B cell (primary cell): ENCODE measurements at regions of chr6 and their contacts with region 1.

Region 1: GRCh38 chr6:169701954-169702839 is at the starts of genes C6orf120 and WDR27:
- DNase-seq: peak; percentile 98
- ATAC-seq: peak; percentile 90
- H3K4me3 ChIP-seq: peak within 1 kb of the TSS; percentile 61 to 95 (median 85)
- H3K4me3 Mint-ChIP-seq: peak within 1 kb of the TSS; percentile 95
- H3K27ac ChIP-seq: peak within 1 kb of the TSS; percentile 86 to 95
- H3K27ac Mint-ChIP-seq: peak within 1 kb of the TSS; percentile 94
- H3K4me1 ChIP-seq: peaks cover 27 to 44% of the 10 kb centered on the region in 2 donors
- H3K4me1 Mint-ChIP-seq: peaks cover 52% of the 10 kb centered on the region
- H3K27me3 ChIP-seq: no peaks in the 10 kb centered on the region
- H3K27me3 Mint-ChIP-seq: no peaks in the 10 kb centered on the region
- CTCF ChIP-seq: no peak
- total RNA-seq, gene C6orf120: 24.9 and 27.1 TPM in 2 replicates
- total RNA-seq, gene WDR27: 76.4 and 86.3 TPM in 2 replicates

Region 2: GRCh38 chr6:169212897-169213813 is 489.0 kb before region 1 on chr6:
- CTCF ChIA-PET with region 1: no interaction called
- POLR2A ChIA-PET with region 1: interaction called, 3 read pairs
- intact Hi-C with region 1: loop called (anchors 2 kb)
- DNase-seq: peak; percentile 93
- ATAC-seq: peak; percentile 98
- H3K4me3 ChIP-seq: peak overlapping the region in 4 of 5 experiments; percentile 18 to 57 (median 40)
- H3K4me3 Mint-ChIP-seq: peak overlapping the region; percentile 60
- H3K27ac ChIP-seq: peak overlapping the region; percentile 36 to 49
- H3K27ac Mint-ChIP-seq: peak overlapping the region; percentile 47
- H3K4me1 ChIP-seq: peaks cover 4 to 9% of the 10 kb centered on the region in 2 donors
- H3K4me1 Mint-ChIP-seq: peaks cover 13% of the 10 kb centered on the region
- H3K27me3 ChIP-seq: no peaks in the 10 kb centered on the region
- H3K27me3 Mint-ChIP-seq: no peaks in the 10 kb centered on the region
- CTCF ChIP-seq: peak; percentile 17

Region 3: GRCh38 chr6:169589293-169589692 is 112.9 kb before region 1 on chr6:
- CTCF ChIA-PET with region 1: no interaction called
- POLR2A ChIA-PET with region 1: no interaction called
- intact Hi-C with region 1: loop called (anchors 10 kb)
- DNase-seq: peak; percentile 79
- ATAC-seq: peak; percentile 59
- H3K4me3 ChIP-seq: peak overlapping the region in 1 of 5 experiments; percentile 52
- H3K4me3 Mint-ChIP-seq: peak overlapping the region; percentile 63
- H3K27ac ChIP-seq: peak overlapping the region; percentile 84 to 87
- H3K27ac Mint-ChIP-seq: peak overlapping the region; percentile 73
- H3K4me1 ChIP-seq: peaks cover 45 to 49% of the 10 kb centered on the region in 2 donors
- H3K4me1 Mint-ChIP-seq: peaks cover 56% of the 10 kb centered on the region
- H3K27me3 ChIP-seq: no peaks in the 10 kb centered on the region
- H3K27me3 Mint-ChIP-seq: no peaks in the 10 kb centered on the region
- CTCF ChIP-seq: no peak

Region 4: DNA sequence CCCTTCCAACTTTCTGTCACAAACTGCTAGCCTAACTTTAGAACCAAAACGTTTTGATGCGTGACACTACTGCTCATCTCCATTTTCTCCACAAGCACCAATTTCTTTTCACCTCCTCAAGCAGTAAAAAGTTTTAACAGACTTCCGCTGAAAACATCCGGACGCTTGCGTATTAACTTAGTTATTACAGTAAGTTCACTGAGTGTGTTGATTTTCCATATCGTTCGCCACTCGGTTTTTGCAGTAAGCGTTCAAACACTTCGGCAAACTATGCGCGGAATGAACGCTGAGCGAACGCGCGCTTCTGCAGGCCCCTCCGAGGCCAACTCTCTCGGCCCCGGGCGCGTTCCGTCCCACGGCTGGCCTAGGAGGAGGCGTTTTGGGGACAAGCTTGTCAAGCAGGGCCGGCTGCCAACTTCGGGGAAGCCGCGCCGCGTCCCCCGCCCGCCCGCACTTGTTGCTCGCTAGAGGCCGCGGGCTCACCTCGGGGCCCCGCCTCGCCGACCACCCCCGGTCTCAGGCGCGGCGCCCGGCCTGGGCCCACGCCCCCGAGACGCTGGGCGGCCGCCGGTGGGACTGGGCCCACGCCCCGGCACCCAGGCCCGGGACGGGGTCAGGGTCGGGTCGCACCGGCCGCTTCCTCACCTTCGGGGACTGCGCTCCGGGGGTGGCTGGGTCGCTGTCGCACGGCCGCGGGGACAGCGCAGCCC is 21.2 kb after region 1 on chr6:
- CTCF ChIA-PET with region 1: interaction called, 8 read pairs
- POLR2A ChIA-PET with region 1: interaction called, 28 read pairs
- intact Hi-C with region 1: loop called (anchors 1 kb)
- DNase-seq: peak; percentile 85
- ATAC-seq: peak; percentile 39
- H3K4me3 ChIP-seq: peak overlapping the region; percentile 58 to 95 (median 77)
- H3K4me3 Mint-ChIP-seq: peak overlapping the region; percentile 90
- H3K27ac ChIP-seq: peak overlapping the region; percentile 77 to 88
- H3K27ac Mint-ChIP-seq: peak overlapping the region; percentile 89
- H3K4me1 ChIP-seq: peaks cover 17 to 18% of the 10 kb centered on the region in 2 donors
- H3K4me1 Mint-ChIP-seq: peaks cover 33% of the 10 kb centered on the region
- H3K27me3 ChIP-seq: no peaks in the 10 kb centered on the region
- H3K27me3 Mint-ChIP-seq: no peaks in the 10 kb centered on the region
- CTCF ChIP-seq: no peak

Region 5: GRCh38 chr6:169751242-169752073 is 49.3 kb after region 1 on chr6 and contains the starts of genes DYNLT2 and ERMARD:
- CTCF ChIA-PET with region 1: interaction called, 6 read pairs
- POLR2A ChIA-PET with region 1: interaction called, 20 read pairs
- intact Hi-C with region 1: loop called (anchors 1 kb)
- DNase-seq: peak; percentile 97
- ATAC-seq: peak; percentile 89
- H3K4me3 ChIP-seq: peak within 1 kb of the TSS; percentile 72 to 85 (median 79)
- H3K4me3 Mint-ChIP-seq: peak within 1 kb of the TSS; percentile 98
- H3K27ac ChIP-seq: peak within 1 kb of the TSS; percentile 91 to 97
- H3K27ac Mint-ChIP-seq: peak within 1 kb of the TSS; percentile 98
- H3K4me1 ChIP-seq: peaks cover 17 to 20% of the 10 kb centered on the region in 2 donors
- H3K4me1 Mint-ChIP-seq: peaks cover 27% of the 10 kb centered on the region
- H3K27me3 ChIP-seq: no peaks in the 10 kb centered on the region
- H3K27me3 Mint-ChIP-seq: no peaks in the 10 kb centered on the region
- CTCF ChIP-seq: no peak
- total RNA-seq, gene DYNLT2: 6.9 and 7.2 TPM in 2 replicates
- total RNA-seq, gene ERMARD: 41.5 and 42.8 TPM in 2 replicates

Region 6: DNA sequence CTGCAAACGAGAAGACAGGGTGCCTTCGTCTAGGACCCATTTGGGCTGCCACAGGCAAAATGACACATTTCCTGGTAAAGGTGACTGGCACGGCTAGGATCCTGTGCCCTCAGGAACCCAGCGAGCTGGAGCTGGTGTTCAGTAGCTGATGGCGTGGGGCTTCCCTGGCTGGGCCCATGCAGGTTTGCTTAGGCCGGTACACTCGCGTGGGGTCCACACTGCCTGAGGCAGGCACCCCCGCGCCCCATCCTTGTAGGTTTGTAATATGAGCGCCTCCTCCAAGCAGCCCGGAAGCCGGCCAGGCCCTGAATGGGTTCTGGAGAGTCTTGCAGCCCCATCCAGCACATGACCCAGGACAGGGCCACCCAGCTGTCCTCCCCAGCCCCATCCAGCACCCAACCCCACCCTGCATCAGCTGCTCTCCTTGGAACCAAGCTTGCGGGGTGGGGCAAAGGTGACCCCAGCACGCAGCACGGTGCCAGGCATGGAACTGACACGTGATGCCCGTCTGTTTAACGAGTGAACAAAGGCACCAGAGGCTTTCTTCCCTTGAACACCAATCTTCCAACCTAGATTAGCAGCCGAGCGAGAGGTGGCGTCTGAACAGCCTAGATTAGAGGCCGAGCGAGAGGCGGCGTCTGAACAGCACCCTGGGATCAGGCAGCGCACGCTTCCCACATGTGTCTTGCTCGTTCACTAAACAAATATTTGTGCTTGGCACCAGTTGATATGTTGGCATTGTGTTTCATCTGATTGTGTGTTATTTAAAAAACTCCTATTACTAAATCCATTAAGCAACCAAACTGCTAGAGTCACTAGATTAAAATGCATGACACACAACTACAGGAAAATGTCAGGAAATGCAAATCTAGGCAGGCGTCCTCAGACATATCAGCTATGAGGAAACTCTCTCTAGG is 476.6 kb after region 1 on chr6:
- CTCF ChIA-PET with region 1: no interaction called
- POLR2A ChIA-PET with region 1: no interaction called
- intact Hi-C with region 1: no loop called
- DNase-seq: no peak
- ATAC-seq: no peak
- H3K4me3 ChIP-seq: no peak overlapping the region
- H3K4me3 Mint-ChIP-seq: no peak overlapping the region
- H3K27ac ChIP-seq: no peak overlapping the region
- H3K27ac Mint-ChIP-seq: no peak overlapping the region
- H3K4me1 ChIP-seq: no peaks in the 10 kb centered on the region
- H3K4me1 Mint-ChIP-seq: no peaks in the 10 kb centered on the region
- H3K27me3 ChIP-seq: no peaks in the 10 kb centered on the region
- H3K27me3 Mint-ChIP-seq: no peaks in the 10 kb centered on the region
- CTCF ChIP-seq: no peak

Region 7: GRCh38 chr6:170554013-170554795 is 852.0 kb after region 1 on chr6 and contains the start of gene TBP:
- CTCF ChIA-PET with region 1: no interaction called
- POLR2A ChIA-PET with region 1: interaction called, 5 read pairs
- intact Hi-C with region 1: loop called (anchors 1 kb)
- DNase-seq: peak; percentile 97
- ATAC-seq: peak; percentile 94
- H3K4me3 ChIP-seq: peak within 1 kb of the TSS; percentile 71 to 99 (median 85)
- H3K4me3 Mint-ChIP-seq: no peak within 1 kb of the TSS
- H3K27ac ChIP-seq: peak within 1 kb of the TSS; percentile 91 to 92
- H3K27ac Mint-ChIP-seq: no peak within 1 kb of the TSS
- H3K4me1 ChIP-seq: peaks cover 27 to 28% of the 10 kb centered on the region in 2 donors
- H3K4me1 Mint-ChIP-seq: peaks cover 30% of the 10 kb centered on the region
- H3K27me3 ChIP-seq: no peaks in the 10 kb centered on the region
- H3K27me3 Mint-ChIP-seq: no peaks in the 10 kb centered on the region
- CTCF ChIP-seq: no peak
- total RNA-seq, gene TBP: 24.7 and 29.5 TPM in 2 replicates

Region 8: DNA sequence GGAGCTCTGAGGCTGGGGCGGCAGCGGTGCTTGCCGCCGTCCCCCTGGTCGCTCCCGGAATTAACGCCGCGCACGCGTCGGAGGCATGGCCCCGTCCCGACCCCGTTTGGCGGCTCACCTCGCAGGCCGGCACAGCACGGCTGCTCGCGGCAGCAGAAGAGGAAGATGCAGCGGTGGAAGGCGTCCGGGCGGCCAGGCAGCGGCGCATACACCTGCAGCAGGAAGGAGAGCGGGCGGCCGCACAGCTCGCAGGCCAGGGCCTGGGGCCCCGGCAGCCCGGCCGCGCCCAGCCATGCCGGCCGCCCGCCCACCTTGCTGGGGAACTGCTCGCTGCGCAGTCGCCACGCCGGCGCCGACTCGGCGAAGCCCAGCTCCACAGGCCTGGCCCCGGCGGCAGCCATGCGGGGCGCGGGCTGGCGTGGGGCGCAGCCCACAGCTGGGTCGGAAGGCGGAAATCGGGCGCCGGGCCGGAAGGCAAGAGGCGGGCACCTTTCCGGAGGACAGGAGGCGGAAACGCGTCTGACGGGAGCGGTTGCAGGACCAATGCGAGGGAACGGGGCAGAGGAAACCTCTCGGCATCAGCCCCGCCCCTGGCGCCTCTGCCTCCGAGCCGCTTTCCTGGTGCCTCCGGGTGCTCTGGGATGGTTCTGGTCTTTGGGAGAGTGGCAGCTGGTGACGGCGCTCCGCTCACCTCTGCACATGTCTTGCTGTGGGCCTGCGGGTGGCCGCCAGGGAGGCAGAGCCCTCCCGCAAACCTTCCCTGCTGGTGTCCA is 882.2 kb after region 1 on chr6 and contains the start of gene PDCD2:
- CTCF ChIA-PET with region 1: no interaction called
- POLR2A ChIA-PET with region 1: no interaction called
- intact Hi-C with region 1: loop called (anchors 1 kb)
- DNase-seq: peak; percentile 93
- ATAC-seq: peak; percentile 93
- H3K4me3 ChIP-seq: peak within 1 kb of the TSS; percentile 76 to 85 (median 82)
- H3K4me3 Mint-ChIP-seq: peak within 1 kb of the TSS; percentile 98
- H3K27ac ChIP-seq: peak within 1 kb of the TSS; percentile 82 to 86
- H3K27ac Mint-ChIP-seq: peak within 1 kb of the TSS; percentile 96
- H3K4me1 ChIP-seq: peaks cover 14 to 16% of the 10 kb centered on the region in 2 donors
- H3K4me1 Mint-ChIP-seq: peaks cover 25% of the 10 kb centered on the region
- H3K27me3 ChIP-seq: peaks cover 0 to 7% (median 0%) of the 10 kb centered on the region in 4 experiments
- H3K27me3 Mint-ChIP-seq: no peaks in the 10 kb centered on the region
- CTCF ChIP-seq: no peak
- total RNA-seq, gene PDCD2: 64.5 and 71.0 TPM in 2 replicates